ENCODE measurements at regions of chr19 and their contacts with region 1.

Region 1: DNA sequence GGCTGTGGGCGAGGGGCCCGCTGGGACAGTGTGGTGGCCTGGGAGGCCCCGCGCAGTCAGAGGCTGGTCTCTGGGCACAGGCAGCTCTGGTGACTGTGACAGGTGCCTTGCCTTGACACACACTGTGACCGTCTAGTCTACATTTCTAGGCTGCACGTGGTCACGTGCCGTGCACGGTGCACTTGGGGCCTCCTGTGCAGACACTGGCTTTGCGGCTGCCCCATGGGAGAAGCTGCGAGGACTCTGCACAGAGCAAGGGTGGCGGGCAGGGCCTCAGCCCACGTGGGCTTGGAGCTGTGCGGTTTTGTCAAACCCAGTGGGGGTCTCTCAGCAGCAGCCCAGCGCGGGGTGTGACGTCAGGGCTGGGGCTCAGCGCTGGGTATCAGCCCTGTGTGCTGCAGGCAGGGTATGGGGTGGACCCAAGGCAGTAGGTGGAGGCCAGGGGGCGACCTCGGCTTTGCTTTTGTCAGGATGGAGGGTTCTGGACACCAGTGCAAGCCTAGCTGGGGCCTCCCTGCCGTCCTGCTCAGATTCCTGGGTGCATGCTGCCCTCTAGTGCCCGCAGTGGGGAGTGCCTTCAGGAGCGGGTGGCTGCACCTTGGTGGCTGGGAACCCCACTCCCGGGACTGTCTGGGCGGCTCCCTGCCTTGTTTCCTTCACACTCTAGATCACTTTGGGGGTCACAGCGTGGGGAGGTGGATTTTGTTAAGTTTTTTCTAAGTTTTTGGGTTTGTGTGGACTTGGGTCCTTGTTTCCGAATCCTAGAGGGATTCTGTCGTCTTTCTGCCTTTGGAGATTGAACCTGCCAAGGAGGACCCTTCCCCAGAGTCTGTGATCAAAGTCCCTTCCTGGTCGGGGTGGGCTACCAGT is 62.6 kb downstream of the KDM4B start:
- DNase-seq: peak; percentile 89
- H3K4me3 ChIP-seq: no peak overlapping the region
- H3K27ac ChIP-seq: no peak overlapping the region
- H3K4me1 ChIP-seq: peaks cover 36% of the 10 kb centered on the region
- H3K27me3 ChIP-seq: no peaks in the 10 kb centered on the region
- CTCF ChIP-seq: peak; percentile 80 to 93 (median 86)
- POLR2A ChIP-seq: no peak

Region 2: DNA sequence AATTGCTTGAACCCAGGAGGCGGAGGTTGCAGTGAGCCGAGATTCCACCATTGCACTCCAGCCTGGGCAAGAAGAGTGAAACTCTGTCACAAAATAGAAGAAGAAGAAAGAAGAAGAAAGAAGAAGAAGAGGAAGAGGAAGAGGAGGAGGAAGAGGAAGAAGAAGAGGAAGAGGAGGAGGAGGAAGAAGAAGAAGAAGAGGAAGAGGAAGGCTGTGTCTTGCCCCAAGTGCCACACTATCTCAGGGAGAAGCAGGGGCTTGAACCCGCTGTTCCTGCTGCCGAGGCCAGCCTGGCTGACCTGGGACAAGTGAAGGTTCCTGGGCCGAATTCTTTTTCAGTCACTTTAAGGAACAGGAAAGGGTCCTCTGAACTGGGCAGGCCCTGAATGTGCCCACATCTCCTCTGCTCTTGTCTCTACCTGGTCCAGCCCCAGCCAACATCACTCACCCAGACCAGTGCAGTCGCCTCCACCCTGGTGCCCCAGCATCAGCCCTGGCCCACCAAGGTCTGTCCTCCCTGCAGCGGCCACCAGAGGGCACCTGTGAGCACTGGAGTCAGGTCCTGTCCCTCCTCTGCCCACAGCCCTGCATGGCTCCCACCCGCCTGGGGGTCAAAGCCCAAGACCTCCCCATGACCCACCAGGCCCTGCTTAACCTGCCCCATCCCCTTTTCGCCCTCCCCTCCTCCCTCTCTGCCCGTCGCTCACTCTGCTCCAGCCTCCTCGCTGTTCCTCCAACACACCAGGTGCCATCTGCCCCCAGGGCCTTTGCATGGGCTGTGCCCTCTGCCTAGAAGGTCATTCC is 219.9 kb before region 1 on chr19:
- intact Hi-C with region 1: loop called (anchors 5 kb)
- DNase-seq: peak; percentile 89
- H3K4me3 ChIP-seq: no peak overlapping the region
- H3K27ac ChIP-seq: no peak overlapping the region
- H3K4me1 ChIP-seq: no peaks in the 10 kb centered on the region
- H3K27me3 ChIP-seq: no peaks in the 10 kb centered on the region
- CTCF ChIP-seq: peak; percentile 68 to 90 (median 78)
- POLR2A ChIP-seq: no peak

Region 3: GRCh38 chr19:4870025-4870700 is 161.3 kb before region 1 on chr19:
- intact Hi-C with region 1: loop called (anchors 5 kb)
- DNase-seq: peak; percentile 40
- H3K4me3 ChIP-seq: no peak overlapping the region
- H3K27ac ChIP-seq: peak overlapping the region in 1 of 2 donors; percentile 45
- H3K4me1 ChIP-seq: peaks cover 15% of the 10 kb centered on the region
- H3K27me3 ChIP-seq: no peaks in the 10 kb centered on the region
- CTCF ChIP-seq: no peak
- POLR2A ChIP-seq: no peak

Measured in testis (tissue), 5 donors.